Thyroid gland (tissue), 4 donors: ENCODE measurements at regions of chr2 and their contacts with region 1.

Region 1: GRCh38 chr2:68909793-68910674 is 38.8 kb upstream of the BMP10 start:
- DNase-seq: peak; percentile 78 to 87
- H3K4me3 ChIP-seq: no peak overlapping the region
- H3K27ac ChIP-seq: no peak overlapping the region
- H3K4me1 ChIP-seq: peaks cover 12 to 13% of the 10 kb centered on the region in 2 donors
- H3K27me3 ChIP-seq: no peaks in the 10 kb centered on the region
- CTCF ChIP-seq: peak; percentile 82 to 94 (median 90)
- POLR2A ChIP-seq: no peak

Region 2: GRCh38 chr2:68751397-68752339 is 158.4 kb before region 1 on chr2:
- intact Hi-C with region 1: loop called (anchors 5 kb)
- DNase-seq: peak; percentile 91 to 95
- H3K4me3 ChIP-seq: no peak overlapping the region
- H3K27ac ChIP-seq: no peak overlapping the region
- H3K4me1 ChIP-seq: peaks cover 9 to 13% of the 10 kb centered on the region in 2 donors
- H3K27me3 ChIP-seq: no peaks in the 10 kb centered on the region
- CTCF ChIP-seq: peak; percentile 73 to 94 (median 87)
- POLR2A ChIP-seq: no peak

Region 3: DNA sequence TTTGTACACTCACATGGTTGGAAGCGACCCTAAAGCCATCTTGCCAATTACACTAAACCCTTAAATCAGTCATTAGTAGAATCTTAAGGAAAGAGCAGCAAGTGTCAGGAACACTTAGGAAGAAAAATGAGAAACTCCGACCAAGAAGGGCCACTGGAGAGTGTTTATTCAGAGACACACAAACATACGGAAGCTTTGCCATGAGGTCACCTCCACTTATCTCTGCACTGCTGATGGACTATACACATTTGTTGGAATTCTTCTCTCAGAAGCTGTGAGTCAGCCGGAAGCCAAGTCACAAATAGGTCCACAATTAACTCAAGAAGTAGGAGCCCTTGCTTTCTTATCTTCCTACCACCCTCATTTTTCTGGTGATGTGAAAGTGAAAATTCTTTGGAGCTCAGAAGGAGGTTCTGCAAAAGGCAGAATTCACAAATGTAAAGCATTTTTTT is 60.4 kb before region 1 on chr2:
- intact Hi-C with region 1: no loop called
- DNase-seq: no peak
- H3K4me3 ChIP-seq: no peak overlapping the region
- H3K27ac ChIP-seq: no peak overlapping the region
- H3K4me1 ChIP-seq: no peaks in the 10 kb centered on the region
- H3K27me3 ChIP-seq: no peaks in the 10 kb centered on the region
- CTCF ChIP-seq: no peak
- POLR2A ChIP-seq: no peak